Panc1 (cell line): ENCODE measurements at regions of chr1 and their contacts with region 1.

Region 1: GRCh38 chr1:7667625-7668218 is 103.4 kb upstream of the VAMP3 start:
- DNase-seq: peak; percentile 51
- ATAC-seq: peak; percentile 89
- H3K4me3 ChIP-seq: no peak overlapping the region
- H3K27ac ChIP-seq: no peak overlapping the region
- H3K4me1 ChIP-seq: peaks cover 3% of the 10 kb centered on the region; the same call in 1 of the 2 replicates
- H3K27me3 ChIP-seq: no peaks in the 10 kb centered on the region
- CTCF ChIP-seq: peak; percentile 99

Region 2: DNA sequence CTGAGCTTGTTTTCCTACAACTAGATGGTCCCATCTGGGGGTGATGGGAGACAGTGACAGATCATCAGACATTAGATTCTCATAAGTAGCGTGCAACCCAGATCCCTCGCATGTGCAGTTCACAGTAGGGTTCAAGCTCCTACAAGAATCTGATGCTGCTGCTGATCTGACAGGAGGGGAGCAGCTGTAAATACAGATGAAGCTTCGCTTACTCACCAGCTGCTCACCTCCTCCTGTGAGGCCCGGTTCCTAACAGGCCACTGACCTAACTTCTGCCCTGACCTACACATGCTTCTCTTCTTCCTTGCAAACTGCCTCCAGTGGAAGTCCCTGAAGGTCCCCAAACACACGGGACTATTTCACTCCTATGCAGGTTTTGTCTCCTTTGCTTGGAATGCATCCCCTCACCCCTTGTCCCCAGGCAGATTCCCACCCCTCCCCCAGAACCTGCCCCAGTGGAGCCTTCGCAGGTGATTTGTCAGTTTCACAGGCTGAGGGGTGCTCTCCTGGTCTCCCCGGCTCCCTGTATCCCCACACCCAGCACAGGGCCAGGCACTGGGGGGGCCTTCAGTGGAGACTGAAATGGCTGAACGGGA is 1093.6 kb before region 1 on chr1:
- CTCF ChIA-PET with region 1: no interaction called
- POLR2A ChIA-PET with region 1: no interaction called
- in situ Hi-C with region 1: no loop called
- intact Hi-C with region 1: no loop called
- DNase-seq: no peak
- ATAC-seq: no peak
- H3K4me3 ChIP-seq: no peak overlapping the region
- H3K27ac ChIP-seq: no peak overlapping the region
- H3K4me1 ChIP-seq: peaks cover 2% of the 10 kb centered on the region
- H3K27me3 ChIP-seq: no peaks in the 10 kb centered on the region
- CTCF ChIP-seq: no peak

Region 3: GRCh38 chr1:7462617-7463016 is 205.1 kb before region 1 on chr1:
- CTCF ChIA-PET with region 1: no interaction called
- POLR2A ChIA-PET with region 1: no interaction called
- in situ Hi-C with region 1: no loop called
- intact Hi-C with region 1: no loop called
- DNase-seq: no peak
- ATAC-seq: no peak
- H3K4me3 ChIP-seq: no peak overlapping the region
- H3K27ac ChIP-seq: no peak overlapping the region
- H3K4me1 ChIP-seq: no peaks in the 10 kb centered on the region
- H3K27me3 ChIP-seq: no peaks in the 10 kb centered on the region
- CTCF ChIP-seq: no peak

Region 4: GRCh38 chr1:7630378-7630777 is 37.3 kb before region 1 on chr1:
- CTCF ChIA-PET with region 1: no interaction called
- POLR2A ChIA-PET with region 1: no interaction called
- in situ Hi-C with region 1: no loop called
- intact Hi-C with region 1: no loop called
- DNase-seq: no peak
- ATAC-seq: no peak
- H3K4me3 ChIP-seq: no peak overlapping the region
- H3K27ac ChIP-seq: no peak overlapping the region
- H3K4me1 ChIP-seq: no peaks in the 10 kb centered on the region
- H3K27me3 ChIP-seq: peaks cover 16% of the 10 kb centered on the region
- CTCF ChIP-seq: no peak

Region 5: DNA sequence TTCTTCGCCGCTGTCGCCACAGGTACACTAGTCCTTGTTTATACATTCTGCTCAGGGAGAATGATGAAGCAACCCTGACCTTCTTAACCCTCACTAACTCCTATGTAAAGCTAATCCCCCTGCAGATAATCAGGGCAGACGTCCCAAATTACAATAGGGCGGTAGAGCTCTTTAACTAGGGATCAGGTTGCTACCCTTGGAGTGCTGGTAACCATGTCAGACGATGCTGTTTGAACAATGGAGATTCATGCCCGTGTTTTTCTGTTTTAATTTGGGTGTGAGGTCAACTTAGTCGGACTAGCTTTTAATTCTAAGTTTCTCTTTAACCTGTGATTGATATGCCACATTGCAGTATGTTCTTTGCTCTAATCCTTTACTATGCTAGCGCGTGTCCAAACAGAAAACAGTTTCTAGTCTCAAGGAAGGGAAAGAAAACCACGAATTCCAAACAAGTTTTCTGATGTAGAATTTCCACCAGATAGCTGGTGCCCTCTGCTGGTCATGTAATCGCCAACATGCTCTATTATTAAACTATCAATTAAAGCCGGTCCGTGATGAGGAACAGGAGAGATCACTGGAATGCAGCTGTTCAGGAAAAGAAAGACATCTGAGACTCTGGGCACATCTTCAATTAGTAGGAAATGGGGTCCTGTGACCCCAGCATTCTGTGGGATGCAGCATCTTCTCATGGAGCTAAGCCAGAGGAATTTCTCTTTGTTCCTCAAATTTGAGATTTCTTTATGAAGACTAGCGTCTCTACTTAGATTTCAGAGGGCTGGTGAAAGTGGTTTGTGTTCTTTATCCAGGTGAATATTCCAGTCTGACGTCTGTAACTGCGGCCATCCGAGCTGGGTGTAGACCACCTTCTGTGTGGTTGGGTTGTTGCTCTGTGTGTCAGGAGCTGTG is 85.0 kb after region 1 on chr1:
- CTCF ChIA-PET with region 1: interaction called, 135 read pairs
- POLR2A ChIA-PET with region 1: interaction called, 7 read pairs
- in situ Hi-C with region 1: no loop called
- intact Hi-C with region 1: loop called (anchors 1 kb)
- DNase-seq: peak; percentile 50
- ATAC-seq: peak; percentile 84
- H3K4me3 ChIP-seq: peak overlapping the region; percentile 2 to 21; a peak in 2 of 4 replicates
- H3K27ac ChIP-seq: no peak overlapping the region
- H3K4me1 ChIP-seq: peaks cover 3% of the 10 kb centered on the region; the same call in 1 of the 2 replicates
- H3K27me3 ChIP-seq: no peaks in the 10 kb centered on the region
- CTCF ChIP-seq: peak; percentile 87

Region 6: DNA sequence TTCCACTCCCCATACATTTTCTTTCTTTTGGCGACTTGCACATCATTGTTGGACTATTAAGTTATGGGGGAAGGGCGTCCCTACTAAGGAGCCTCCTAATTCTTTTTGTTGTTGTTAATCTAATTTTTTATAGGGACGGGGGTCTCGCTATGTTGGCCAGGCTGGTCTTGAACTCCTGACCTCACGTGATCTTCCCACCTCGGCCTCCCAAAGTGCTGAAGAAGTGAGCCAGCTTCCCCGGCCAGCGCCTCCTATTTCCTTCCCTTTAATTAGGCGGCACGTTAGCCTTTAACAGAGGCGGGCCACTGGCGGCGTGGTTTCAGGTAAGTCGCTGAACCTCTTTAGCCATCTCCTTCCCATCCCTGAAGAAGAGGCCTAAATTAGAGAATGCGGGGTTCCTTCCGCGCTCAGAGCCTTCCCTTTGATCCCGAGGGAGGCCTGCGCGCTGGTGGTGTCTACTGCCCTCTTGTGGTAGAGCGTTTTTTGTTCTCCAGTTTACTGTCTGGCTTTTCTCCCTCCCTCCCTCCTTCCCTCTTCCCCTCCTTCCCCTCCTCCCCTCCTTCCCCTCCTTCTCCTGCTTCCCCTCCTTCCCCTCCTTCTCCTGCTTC is 234.9 kb after region 1 on chr1:
- CTCF ChIA-PET with region 1: interaction called, 4 read pairs
- POLR2A ChIA-PET with region 1: no interaction called
- in situ Hi-C with region 1: no loop called
- intact Hi-C with region 1: loop called (anchors 5 kb)
- DNase-seq: peak; percentile 66
- ATAC-seq: peak; percentile 97
- H3K4me3 ChIP-seq: peak overlapping the region; percentile 24 to 56
- H3K27ac ChIP-seq: no peak overlapping the region
- H3K4me1 ChIP-seq: no peaks in the 10 kb centered on the region
- H3K27me3 ChIP-seq: no peaks in the 10 kb centered on the region
- CTCF ChIP-seq: peak; percentile 87

Region 7: GRCh38 chr1:7975212-7975865 is 307.6 kb after region 1 on chr1:
- CTCF ChIA-PET with region 1: no interaction called
- POLR2A ChIA-PET with region 1: interaction called, 10 read pairs
- in situ Hi-C with region 1: no loop called
- intact Hi-C with region 1: no loop called
- DNase-seq: peak; percentile 86
- ATAC-seq: peak; percentile 99
- H3K4me3 ChIP-seq: no peak overlapping the region
- H3K27ac ChIP-seq: peak overlapping the region; percentile 80
- H3K4me1 ChIP-seq: peaks cover 4% of the 10 kb centered on the region
- H3K27me3 ChIP-seq: no peaks in the 10 kb centered on the region
- CTCF ChIP-seq: peak; percentile 98